Activated CD8-positive, alpha-beta T cell treated with anti-CD3 and anti-CD28 coated beads, Interleukin-2, amount 10 ng/mL, durations not matched to agents 7 days and 5 days (primary cell): ENCODE measurements at regions of chr16 and their contacts with region 1.

Region 1: DNA sequence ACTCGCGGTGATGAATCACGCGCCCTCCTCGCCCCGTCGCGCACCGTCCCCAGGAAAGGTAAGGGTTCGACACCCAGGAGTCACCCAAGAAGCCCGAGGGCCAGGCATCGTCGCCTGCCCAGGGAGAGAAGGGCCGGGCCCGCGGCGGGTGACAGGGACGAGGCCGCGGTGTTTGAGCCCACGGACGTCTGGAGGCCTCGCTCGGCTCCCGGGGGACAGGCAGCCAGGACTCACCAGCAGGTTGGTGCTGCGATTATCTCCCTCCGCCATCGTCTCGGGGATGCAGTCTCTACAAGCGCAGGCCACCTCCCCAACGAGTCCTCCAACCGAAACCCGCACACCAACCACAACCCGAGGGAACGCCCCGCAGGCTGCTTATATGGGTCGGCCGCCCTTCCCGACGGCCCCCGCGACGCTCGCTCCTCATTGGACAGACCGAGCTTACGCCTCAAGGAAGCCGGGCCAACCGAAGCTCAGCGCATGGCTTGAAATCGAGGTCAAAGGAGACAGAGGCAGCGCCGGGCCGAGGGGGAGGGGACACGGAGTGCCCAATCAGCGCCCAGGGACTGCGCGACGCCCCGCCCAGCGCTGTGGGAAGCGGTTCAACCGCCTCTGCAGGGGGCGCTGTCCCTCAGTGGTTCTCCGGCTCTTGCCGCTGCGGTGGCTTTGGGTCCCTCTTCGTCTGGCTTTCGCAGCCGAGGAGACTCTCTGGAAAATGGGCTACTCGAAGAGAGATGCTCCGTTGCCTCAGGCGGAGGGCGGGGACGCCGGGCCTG is at the start of gene ARL6IP1:
- DNase-seq: peak; percentile 99
- ATAC-seq: peak; percentile 96
- H3K4me3 Mint-ChIP-seq: peak within 1 kb of the TSS; percentile 89
- H3K27ac Mint-ChIP-seq: peak within 1 kb of the TSS; percentile 98
- H3K4me1 Mint-ChIP-seq: peaks cover 75% of the 10 kb centered on the region
- H3K27me3 Mint-ChIP-seq: no peaks in the 10 kb centered on the region
- total RNA-seq, gene ARL6IP1: 234 to 240 TPM

Region 2: DNA sequence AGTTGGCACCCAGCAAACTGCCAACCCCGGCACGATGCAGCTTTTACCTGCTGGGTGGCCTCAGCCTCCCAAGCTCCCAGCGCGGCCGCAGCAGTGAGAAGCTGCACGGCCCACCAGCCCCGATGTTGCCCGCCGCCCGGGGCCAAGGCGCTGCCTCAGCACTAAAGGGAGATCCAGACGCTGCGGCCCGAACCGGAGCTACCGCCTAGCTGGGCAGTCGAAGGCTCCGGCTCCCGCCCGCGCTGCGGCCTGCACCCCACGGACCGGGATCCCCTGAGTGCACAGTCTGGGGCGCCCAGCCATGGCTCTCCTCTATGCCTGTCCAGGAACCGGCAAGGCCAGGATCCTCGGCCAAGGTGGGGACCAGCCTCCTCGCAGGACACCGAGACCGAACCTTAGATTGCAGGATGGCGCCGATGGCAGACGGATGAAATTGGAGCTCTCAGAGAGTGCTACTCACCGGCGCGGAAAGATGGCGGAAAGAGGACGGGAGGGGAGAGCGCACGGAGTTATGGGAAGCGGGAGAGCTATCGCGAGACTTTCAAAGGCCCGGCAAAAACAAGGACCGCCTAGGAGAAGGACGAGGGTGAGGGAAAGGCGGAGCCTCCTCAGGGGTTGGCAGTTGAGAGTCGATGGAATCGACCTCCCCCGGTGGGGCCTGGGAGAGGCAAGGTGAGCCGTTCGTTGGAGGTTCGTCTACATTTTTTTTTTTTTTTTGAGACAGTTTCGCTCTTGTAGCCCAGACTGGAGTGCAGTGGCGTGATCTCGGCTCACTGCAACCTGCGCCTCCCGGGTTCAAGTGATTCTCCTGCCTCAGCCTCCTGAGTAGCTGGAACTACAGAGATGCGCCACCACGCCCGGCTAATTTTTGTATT is 11.3 kb before region 1 on chr16 and contains the start of gene RPS15A:
- CTCF ChIA-PET with region 1: interaction called, 142 read pairs
- POLR2A ChIA-PET with region 1: interaction called, 189 read pairs
- DNase-seq: peak; percentile 97
- ATAC-seq: peak; percentile 94
- H3K4me3 Mint-ChIP-seq: peak within 1 kb of the TSS; percentile 95
- H3K27ac Mint-ChIP-seq: peak within 1 kb of the TSS; percentile 92
- H3K4me1 Mint-ChIP-seq: peaks cover 68% of the 10 kb centered on the region
- H3K27me3 Mint-ChIP-seq: no peaks in the 10 kb centered on the region
- total RNA-seq, gene RPS15A: 1,594 to 1,602 TPM

Region 3: GRCh38 chr16:18829251-18829650 is 27.9 kb after region 1 on chr16:
- CTCF ChIA-PET with region 1: interaction called, 19 read pairs
- POLR2A ChIA-PET with region 1: interaction called, 8 read pairs
- DNase-seq: no peak
- ATAC-seq: no peak
- H3K4me3 Mint-ChIP-seq: no peak overlapping the region
- H3K27ac Mint-ChIP-seq: no peak overlapping the region
- H3K4me1 Mint-ChIP-seq: no peaks in the 10 kb centered on the region
- H3K27me3 Mint-ChIP-seq: no peaks in the 10 kb centered on the region

Region 4: DNA sequence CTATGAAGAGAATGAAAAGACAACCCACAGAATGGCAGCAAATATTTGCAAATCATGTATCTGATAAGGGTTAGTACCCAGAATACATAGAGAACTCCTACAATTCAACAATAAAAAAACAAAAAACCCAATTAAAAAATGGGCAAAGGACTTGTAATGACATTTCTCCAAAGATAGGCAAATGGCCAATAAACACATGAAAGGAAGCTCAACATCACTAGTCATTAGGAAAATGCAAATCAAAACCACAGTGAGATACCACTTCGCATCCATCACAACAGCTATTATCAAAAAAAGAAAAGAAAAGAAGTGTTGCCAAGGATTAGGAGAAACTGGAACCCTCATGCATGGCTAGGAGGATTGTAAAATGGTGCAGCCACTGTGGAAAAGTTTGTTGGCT is 45.0 kb after region 1 on chr16:
- CTCF ChIA-PET with region 1: interaction called, 23 read pairs
- POLR2A ChIA-PET with region 1: interaction called, 7 read pairs
- DNase-seq: no peak
- ATAC-seq: no peak
- H3K4me3 Mint-ChIP-seq: no peak overlapping the region
- H3K27ac Mint-ChIP-seq: no peak overlapping the region
- H3K4me1 Mint-ChIP-seq: no peaks in the 10 kb centered on the region
- H3K27me3 Mint-ChIP-seq: no peaks in the 10 kb centered on the region

Region 5: GRCh38 chr16:18969050-18969854 is 167.9 kb after region 1 on chr16:
- CTCF ChIA-PET with region 1: interaction called, 13 read pairs
- POLR2A ChIA-PET with region 1: interaction called, 3 read pairs
- DNase-seq: peak; percentile 86
- ATAC-seq: peak; percentile 96
- H3K4me3 Mint-ChIP-seq: peak overlapping the region; percentile 52
- H3K27ac Mint-ChIP-seq: no peak overlapping the region
- H3K4me1 Mint-ChIP-seq: peaks cover 6% of the 10 kb centered on the region
- H3K27me3 Mint-ChIP-seq: peaks cover 7% of the 10 kb centered on the region

Region 6: DNA sequence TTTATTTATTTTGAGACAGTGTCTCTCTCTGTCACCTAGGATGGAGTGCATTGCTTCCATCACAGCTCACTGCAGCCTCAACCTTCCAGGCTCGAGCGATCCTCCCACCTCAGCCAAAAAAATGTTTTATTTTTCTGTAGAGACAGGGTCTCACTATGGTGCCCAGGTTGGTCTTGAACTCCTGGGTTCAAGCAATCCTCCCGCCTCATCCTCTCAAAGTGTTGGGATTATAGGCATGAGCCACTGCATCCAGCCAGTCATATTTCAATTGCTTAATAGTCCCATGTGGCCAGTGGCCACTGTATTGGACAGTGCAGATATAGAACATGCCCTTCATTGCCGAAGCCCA is 197.6 kb after region 1 on chr16:
- CTCF ChIA-PET with region 1: no interaction called
- POLR2A ChIA-PET with region 1: no interaction called
- DNase-seq: no peak
- ATAC-seq: no peak
- H3K4me3 Mint-ChIP-seq: no peak overlapping the region
- H3K27ac Mint-ChIP-seq: no peak overlapping the region
- H3K4me1 Mint-ChIP-seq: peaks cover 5% of the 10 kb centered on the region
- H3K27me3 Mint-ChIP-seq: peaks cover 8% of the 10 kb centered on the region